ENCODE measurements at regions of chr1 and their contacts with region 1.

Region 1: GRCh38 chr1:86499987-86500593 is 31.4 kb downstream of the CLCA1 start:
- DNase-seq: peak; percentile 58
- ATAC-seq: peak; percentile 82
- H3K4me3 ChIP-seq: no peak overlapping the region
- H3K4me3 Mint-ChIP-seq: no peak overlapping the region
- H3K27ac ChIP-seq: no peak overlapping the region
- H3K27ac Mint-ChIP-seq: no peak overlapping the region
- H3K4me1 ChIP-seq: peaks cover 0 to 21% of the 10 kb centered on the region in 2 donors
- H3K4me1 Mint-ChIP-seq: peaks cover 8% of the 10 kb centered on the region
- H3K27me3 ChIP-seq: peaks cover 0 to 11% (median 4%) of the 10 kb centered on the region in 4 experiments
- H3K27me3 Mint-ChIP-seq: peaks cover 36% of the 10 kb centered on the region
- CTCF ChIP-seq: peak; percentile 100

Region 2: GRCh38 chr1:85975912-85976371 is 524.1 kb before region 1 on chr1:
- CTCF ChIA-PET with region 1: no interaction called
- POLR2A ChIA-PET with region 1: no interaction called
- intact Hi-C with region 1: no loop called
- DNase-seq: no peak
- ATAC-seq: no peak
- H3K4me3 ChIP-seq: no peak overlapping the region
- H3K4me3 Mint-ChIP-seq: no peak overlapping the region
- H3K27ac ChIP-seq: no peak overlapping the region
- H3K27ac Mint-ChIP-seq: no peak overlapping the region
- H3K4me1 ChIP-seq: no peaks in the 10 kb centered on the region
- H3K4me1 Mint-ChIP-seq: no peaks in the 10 kb centered on the region
- H3K27me3 ChIP-seq: no peaks in the 10 kb centered on the region
- H3K27me3 Mint-ChIP-seq: no peaks in the 10 kb centered on the region
- CTCF ChIP-seq: no peak

Region 3: DNA sequence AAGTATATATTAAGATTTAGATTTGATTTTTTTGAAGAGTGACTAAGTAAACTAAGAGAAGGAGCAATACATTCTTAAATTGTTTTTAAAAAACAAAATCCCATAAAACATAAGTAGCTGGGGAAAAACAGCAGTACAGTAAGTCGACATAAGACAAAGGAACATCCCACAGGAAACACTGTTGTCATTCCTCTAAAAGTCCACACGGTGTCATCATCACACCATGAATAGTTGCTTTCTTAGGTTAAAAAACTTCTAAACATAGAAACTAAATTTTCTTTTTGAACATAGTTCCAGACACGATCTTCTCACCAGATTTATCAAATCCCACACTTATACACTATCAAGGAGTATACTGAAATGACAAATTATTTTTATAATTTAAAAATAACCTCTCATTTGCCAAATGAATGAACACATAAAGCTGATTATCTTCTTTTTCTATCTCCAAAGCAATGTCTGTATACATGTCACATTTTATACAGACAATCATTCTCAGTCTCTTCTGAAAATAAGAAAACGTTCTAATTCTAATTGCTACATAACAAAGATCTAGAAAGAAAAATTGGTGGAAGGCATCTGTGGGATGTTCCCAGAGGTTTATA is 119.7 kb before region 1 on chr1:
- CTCF ChIA-PET with region 1: interaction called, 53 read pairs
- POLR2A ChIA-PET with region 1: no interaction called
- intact Hi-C with region 1: loop called (anchors 1 kb)
- DNase-seq: peak; percentile 68
- ATAC-seq: peak; percentile 63
- H3K4me3 ChIP-seq: no peak overlapping the region
- H3K4me3 Mint-ChIP-seq: no peak overlapping the region
- H3K27ac ChIP-seq: no peak overlapping the region
- H3K27ac Mint-ChIP-seq: no peak overlapping the region
- H3K4me1 ChIP-seq: peaks cover 0 to 4% of the 10 kb centered on the region in 2 donors
- H3K4me1 Mint-ChIP-seq: peaks cover 8% of the 10 kb centered on the region
- H3K27me3 ChIP-seq: no peaks in the 10 kb centered on the region
- H3K27me3 Mint-ChIP-seq: no peaks in the 10 kb centered on the region
- CTCF ChIP-seq: peak; percentile 88

Region 4: DNA sequence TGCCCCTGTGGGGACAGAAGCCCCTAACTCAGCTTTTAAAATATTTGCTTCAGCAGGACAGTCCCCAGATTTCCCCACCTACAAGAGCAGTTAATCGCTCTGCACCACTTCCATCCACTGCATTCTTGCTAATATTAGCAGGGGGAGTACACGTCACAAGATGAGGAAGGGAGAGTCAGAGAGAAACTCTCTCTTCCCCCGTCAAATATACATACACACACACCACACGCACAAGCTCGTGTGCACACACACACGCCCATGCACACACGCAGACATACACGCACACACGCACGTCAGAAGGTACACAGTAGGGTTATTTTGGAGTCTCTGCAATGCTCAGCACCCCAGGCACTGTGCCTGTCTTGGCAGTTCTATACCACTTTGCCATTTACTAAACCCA is 29.2 kb before region 1 on chr1:
- CTCF ChIA-PET with region 1: interaction called, 21 read pairs
- POLR2A ChIA-PET with region 1: no interaction called
- intact Hi-C with region 1: loop called (anchors 2 kb)
- DNase-seq: no peak
- ATAC-seq: no peak
- H3K4me3 ChIP-seq: no peak overlapping the region
- H3K4me3 Mint-ChIP-seq: no peak overlapping the region
- H3K27ac ChIP-seq: no peak overlapping the region
- H3K27ac Mint-ChIP-seq: no peak overlapping the region
- H3K4me1 ChIP-seq: no peaks in the 10 kb centered on the region
- H3K4me1 Mint-ChIP-seq: peaks cover 4% of the 10 kb centered on the region
- H3K27me3 ChIP-seq: peaks cover 0 to 3% (median 0%) of the 10 kb centered on the region in 4 experiments
- H3K27me3 Mint-ChIP-seq: peaks cover 13% of the 10 kb centered on the region
- CTCF ChIP-seq: no peak

Region 5: GRCh38 chr1:86648255-86648654 is 148.2 kb after region 1 on chr1:
- CTCF ChIA-PET with region 1: interaction called, 11 read pairs
- POLR2A ChIA-PET with region 1: no interaction called
- intact Hi-C with region 1: no loop called
- DNase-seq: no peak
- ATAC-seq: no peak
- H3K4me3 ChIP-seq: no peak overlapping the region
- H3K4me3 Mint-ChIP-seq: no peak overlapping the region
- H3K27ac ChIP-seq: no peak overlapping the region
- H3K27ac Mint-ChIP-seq: no peak overlapping the region
- H3K4me1 ChIP-seq: peaks cover 0 to 3% of the 10 kb centered on the region in 2 donors
- H3K4me1 Mint-ChIP-seq: peaks cover 13% of the 10 kb centered on the region
- H3K27me3 ChIP-seq: no peaks in the 10 kb centered on the region
- H3K27me3 Mint-ChIP-seq: no peaks in the 10 kb centered on the region
- CTCF ChIP-seq: no peak

Region 6: GRCh38 chr1:86704458-86704971 is 204.4 kb after region 1 on chr1 and contains the start of gene SH3GLB1:
- CTCF ChIA-PET with region 1: interaction called, 5 read pairs
- POLR2A ChIA-PET with region 1: no interaction called
- intact Hi-C with region 1: loop called (anchors 1 kb)
- DNase-seq: peak; percentile 97
- ATAC-seq: peak; percentile 85
- H3K4me3 ChIP-seq: peak within 1 kb of the TSS; percentile 79 to 90 (median 82)
- H3K4me3 Mint-ChIP-seq: peak within 1 kb of the TSS; percentile 98
- H3K27ac ChIP-seq: peak within 1 kb of the TSS; percentile 78 to 93
- H3K27ac Mint-ChIP-seq: peak within 1 kb of the TSS; percentile 100
- H3K4me1 ChIP-seq: peaks cover 24 to 30% of the 10 kb centered on the region in 2 donors
- H3K4me1 Mint-ChIP-seq: peaks cover 44% of the 10 kb centered on the region
- H3K27me3 ChIP-seq: no peaks in the 10 kb centered on the region
- H3K27me3 Mint-ChIP-seq: no peaks in the 10 kb centered on the region
- CTCF ChIP-seq: peak; percentile 91
- total RNA-seq, gene SH3GLB1: 55.3 and 57.3 TPM in 2 replicates